ENCODE measurements at regions of chr19 and their contacts with region 1.

Region 1: DNA sequence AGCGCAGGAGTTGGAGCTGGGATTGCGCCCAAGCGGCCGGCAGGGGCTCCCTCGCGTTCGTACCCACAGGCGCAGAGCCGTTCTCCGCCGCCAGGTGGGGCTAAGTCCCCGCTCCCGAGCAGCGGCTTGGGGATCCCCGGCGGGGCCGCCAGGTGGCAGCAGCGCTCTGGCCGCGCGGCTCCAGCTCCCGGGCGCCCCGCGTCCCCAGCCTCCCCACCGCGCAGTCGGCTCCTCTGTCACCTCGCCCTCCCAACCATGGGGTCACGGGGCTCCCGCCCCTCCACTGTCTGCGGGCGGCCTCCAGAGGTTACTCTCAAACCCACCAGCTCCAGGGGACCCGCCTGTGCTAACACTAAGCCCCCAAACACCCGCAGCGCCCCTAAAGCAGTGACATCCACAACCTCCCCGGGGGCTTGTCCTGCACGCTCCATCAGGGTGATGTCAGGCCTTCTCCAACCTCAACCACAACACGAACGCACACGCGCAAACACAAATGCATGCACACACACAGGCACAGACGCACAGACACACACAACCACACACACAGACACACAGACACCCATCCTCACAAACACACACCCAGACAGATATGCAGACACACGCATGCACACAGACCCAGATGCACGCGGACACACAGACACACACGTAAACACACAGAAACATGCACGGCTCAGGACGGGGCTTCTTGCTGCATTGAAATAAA is 18.4 kb upstream of the KCTD15 start:
- DNase-seq: peak; percentile 77 to 99 (median 86)
- ATAC-seq: peak; percentile 99
- H3K4me3 ChIP-seq: no peak overlapping the region
- H3K27ac ChIP-seq: no peak overlapping the region
- H3K4me1 ChIP-seq: peaks cover 3% of the 10 kb centered on the region in 2 donors
- H3K27me3 ChIP-seq: peaks cover 9 to 46% of the 10 kb centered on the region in 2 donors
- CTCF ChIP-seq: peak; percentile 100

Region 2: GRCh38 chr19:33971073-33971472 is 192.8 kb after region 1 on chr19:
- intact Hi-C with region 1: no loop called
- DNase-seq: no peak
- ATAC-seq: no peak
- H3K4me3 ChIP-seq: no peak overlapping the region
- H3K27ac ChIP-seq: no peak overlapping the region
- H3K4me1 ChIP-seq: no peaks in the 10 kb centered on the region
- H3K27me3 ChIP-seq: peaks cover 0 to 1% of the 10 kb centered on the region in 2 donors
- CTCF ChIP-seq: no peak

Region 3: DNA sequence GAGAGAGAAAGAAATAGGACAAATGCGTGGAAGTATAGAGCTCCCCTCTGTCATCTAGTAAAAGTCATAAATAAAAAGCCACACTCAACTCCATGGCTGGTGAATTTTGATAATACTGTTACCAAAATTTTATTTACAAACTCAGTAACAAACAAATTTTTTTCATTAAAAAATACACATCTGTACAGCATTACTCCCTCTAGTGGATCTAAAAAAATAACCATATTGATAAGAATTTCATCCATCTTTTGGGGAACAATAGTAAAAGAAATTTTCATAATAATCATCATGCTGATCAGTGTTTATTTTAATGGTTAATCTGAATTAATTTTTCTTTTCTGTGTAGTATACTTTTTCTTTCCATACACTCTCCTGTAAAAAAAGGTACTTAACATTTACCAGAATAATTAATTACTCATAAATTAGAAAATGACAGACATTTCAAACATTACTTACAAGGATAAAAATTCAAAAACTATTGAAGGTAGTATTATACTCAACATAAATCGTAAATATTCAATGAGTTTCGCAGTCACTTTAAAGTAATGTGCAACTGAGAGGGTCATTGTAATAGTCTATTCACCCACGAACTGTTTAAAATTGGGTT is 220.6 kb after region 1 on chr19:
- intact Hi-C with region 1: loop called in 1 of 2 experiments (anchors 10 kb)
- DNase-seq: peak in 2 of 4 donors; percentile 5
- ATAC-seq: no peak
- H3K4me3 ChIP-seq: no peak overlapping the region
- H3K27ac ChIP-seq: no peak overlapping the region
- H3K4me1 ChIP-seq: no peaks in the 10 kb centered on the region
- H3K27me3 ChIP-seq: peaks cover 3 to 5% of the 10 kb centered on the region in 2 donors
- CTCF ChIP-seq: no peak

Region 4: GRCh38 chr19:34094960-34095359 is 316.7 kb after region 1 on chr19:
- intact Hi-C with region 1: loop called in 1 of 2 experiments (anchors 5 kb)
- DNase-seq: no peak
- ATAC-seq: no peak
- H3K4me3 ChIP-seq: no peak overlapping the region
- H3K27ac ChIP-seq: no peak overlapping the region
- H3K4me1 ChIP-seq: no peaks in the 10 kb centered on the region
- H3K27me3 ChIP-seq: peaks cover 0 to 35% of the 10 kb centered on the region in 2 donors
- CTCF ChIP-seq: no peak

Region 5: GRCh38 chr19:34145741-34146202 is 367.5 kb after region 1 on chr19:
- intact Hi-C with region 1: loop called in 1 of 2 experiments (anchors 5 kb)
- DNase-seq: peak in 2 of 4 donors; percentile 42 to 66
- ATAC-seq: peak; percentile 86
- H3K4me3 ChIP-seq: no peak overlapping the region
- H3K27ac ChIP-seq: no peak overlapping the region
- H3K4me1 ChIP-seq: no peaks in the 10 kb centered on the region
- H3K27me3 ChIP-seq: no peaks in the 10 kb centered on the region
- CTCF ChIP-seq: peak; percentile 67 to 68

Measured in left lung (tissue), 14 donors.